GM18951 (cell line): ENCODE measurements at regions of chr1 and their contacts with region 1.

Region 1: GRCh38 chr1:99180343-99180808 is 83.9 kb upstream of the PLPPR4 start:
- POLR2A ChIP-seq: no peak

Region 2: GRCh38 chr1:98813738-98814309 is 366.6 kb before region 1 on chr1:
- in situ Hi-C with region 1: no loop called
- POLR2A ChIP-seq: no peak

Region 3: GRCh38 chr1:99707535-99708142 is 527.3 kb after region 1 on chr1:
- in situ Hi-C with region 1: loop called (anchors 25 kb)
- POLR2A ChIP-seq: no peak